ENCODE measurements at regions of chr14 and their contacts with region 1.

Region 1: DNA sequence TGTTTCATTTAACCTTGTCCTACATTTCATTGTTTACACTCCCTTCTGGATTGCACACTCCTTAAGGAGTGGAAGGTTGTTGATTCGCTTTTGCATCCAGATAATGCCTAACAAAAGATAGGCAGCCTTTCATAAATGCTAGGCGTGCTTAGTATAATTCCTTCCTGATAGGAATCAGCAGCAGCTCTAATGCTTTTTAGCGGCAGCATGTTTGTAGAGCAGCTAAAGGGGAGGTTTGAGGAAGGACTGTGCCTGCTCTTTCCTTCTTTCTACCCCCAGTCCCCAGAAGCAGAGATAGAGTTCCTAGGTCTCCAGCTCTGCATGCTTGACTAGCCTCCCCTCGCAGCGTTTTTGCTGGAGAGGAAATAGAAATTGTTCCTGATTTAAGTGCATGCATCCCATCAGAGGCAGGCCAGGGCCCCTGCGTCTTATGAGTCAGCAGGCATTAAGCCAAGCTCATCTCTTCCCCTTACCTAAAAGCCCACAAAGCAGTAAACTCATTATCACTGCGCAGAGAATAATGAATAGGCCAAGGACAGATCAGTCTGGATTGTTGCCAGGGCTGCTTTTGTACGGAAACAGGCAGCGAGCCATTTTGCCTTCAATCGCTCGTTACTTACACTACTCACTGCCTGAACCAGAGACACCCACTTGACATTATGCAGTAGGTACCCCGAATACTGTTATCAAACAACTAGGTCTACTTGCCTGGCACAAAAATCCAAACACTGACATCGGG is 14.0 kb upstream of the TBPL2 start:
- DNase-seq: no peak
- ATAC-seq: peak; percentile 78

Region 2: DNA sequence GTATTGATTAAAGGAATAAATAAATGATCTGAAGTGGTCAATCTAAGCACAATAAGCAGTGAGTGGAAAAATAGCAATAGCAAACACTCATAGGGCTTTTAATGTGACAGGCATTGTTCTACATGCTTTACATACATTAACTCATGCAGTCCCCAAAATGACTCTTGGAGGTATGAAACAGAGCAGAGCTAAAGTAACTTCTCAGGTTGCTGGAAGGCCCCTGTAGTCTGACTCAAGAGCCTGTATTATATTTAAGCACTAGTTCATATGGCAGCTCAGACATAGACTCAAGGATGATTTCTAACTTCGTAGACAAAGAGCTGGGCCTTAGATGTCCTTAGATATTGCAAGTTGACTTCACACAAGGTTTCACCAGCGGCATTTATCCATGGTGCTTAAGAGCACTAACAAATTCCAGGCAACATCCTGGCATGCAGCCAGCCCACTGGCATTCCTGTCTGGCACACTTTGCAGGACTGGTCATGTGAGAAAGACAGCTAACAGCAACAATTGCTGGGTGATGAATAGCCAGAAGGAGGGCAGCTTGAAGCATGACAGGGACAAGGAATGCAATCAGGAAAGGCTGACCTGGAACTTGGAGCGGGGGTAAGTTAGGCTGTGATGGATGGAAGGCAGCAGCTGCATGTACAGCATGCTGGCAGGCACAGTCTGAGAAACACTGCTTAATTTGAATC is 102.6 kb after region 1 on chr14:
- intact Hi-C with region 1: loop called (anchors 10 kb)
- DNase-seq: peak; percentile 88
- ATAC-seq: peak; percentile 98